ENCODE measurements at regions of chr10 and their contacts with region 1.

Region 1: GRCh38 chr10:118106426-118106825 is 59.7 kb upstream of the RAB11FIP2 start:
- H3K4me3 ChIP-seq: no peak overlapping the region
- H3K27ac ChIP-seq: no peak overlapping the region
- H3K4me1 ChIP-seq: no peaks in the 10 kb centered on the region
- CTCF ChIP-seq: 0 out of 2 replicates have a peak, but pooled peaks have one; percentile 11

Region 2: GRCh38 chr10:118062798-118063238 is 43.6 kb before region 1 on chr10:
- CTCF ChIA-PET with region 1: interaction called, 11 read pairs
- POLR2A ChIA-PET with region 1: no interaction called
- H3K4me3 ChIP-seq: no peak overlapping the region
- H3K27ac ChIP-seq: no peak overlapping the region
- H3K4me1 ChIP-seq: no peaks in the 10 kb centered on the region
- CTCF ChIP-seq: no peak